ENCODE measurements at regions of chrX and their contacts with region 1.

Region 1: DNA sequence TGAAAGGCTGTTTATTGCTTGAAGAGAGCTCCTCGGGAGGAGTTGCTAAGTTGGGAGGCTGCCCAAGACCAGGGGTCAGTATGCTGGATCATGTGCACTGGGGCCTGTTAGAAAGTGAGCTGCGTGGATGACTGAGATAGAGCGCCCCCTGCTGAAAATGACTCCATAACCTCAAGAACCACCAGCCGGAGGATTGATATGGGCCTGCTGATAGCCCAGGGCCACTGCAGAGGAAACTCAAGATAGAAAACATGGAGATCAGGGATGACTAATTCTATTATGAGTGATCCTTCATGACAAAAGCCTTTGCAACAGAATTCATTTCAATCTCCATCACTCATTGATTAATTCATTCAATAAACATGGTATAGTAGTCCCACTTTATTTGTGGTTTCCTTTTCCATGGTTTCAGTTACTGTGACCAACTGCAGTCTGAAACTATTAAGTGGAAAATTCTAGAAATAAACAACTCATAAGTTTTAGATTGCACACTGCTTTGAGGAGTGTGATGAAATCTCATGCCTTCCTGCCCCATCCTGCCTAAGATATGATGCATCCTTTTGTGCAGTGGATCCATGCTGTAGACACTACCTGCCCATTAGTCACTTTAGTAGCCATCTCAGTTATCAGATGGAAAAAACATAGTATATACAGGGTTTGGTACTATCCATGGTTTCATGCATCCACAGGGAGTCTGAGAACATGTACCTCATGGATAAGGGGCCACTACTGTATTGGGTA is 126.7 kb upstream of the MBNL3 start:
- H3K4me3 Mint-ChIP-seq: no peak overlapping the region
- H3K27ac Mint-ChIP-seq: no peak overlapping the region
- H3K4me1 Mint-ChIP-seq: no peaks in the 10 kb centered on the region
- H3K27me3 Mint-ChIP-seq: no peaks in the 10 kb centered on the region

Region 2: GRCh38 chrX:132092439-132093065 is 523.0 kb before region 1 on chrX:
- intact Hi-C with region 1: loop called (anchors 10 kb)
- H3K4me3 Mint-ChIP-seq: no peak overlapping the region
- H3K27ac Mint-ChIP-seq: no peak overlapping the region
- H3K4me1 Mint-ChIP-seq: peaks cover 11% of the 10 kb centered on the region
- H3K27me3 Mint-ChIP-seq: no peaks in the 10 kb centered on the region

Region 3: DNA sequence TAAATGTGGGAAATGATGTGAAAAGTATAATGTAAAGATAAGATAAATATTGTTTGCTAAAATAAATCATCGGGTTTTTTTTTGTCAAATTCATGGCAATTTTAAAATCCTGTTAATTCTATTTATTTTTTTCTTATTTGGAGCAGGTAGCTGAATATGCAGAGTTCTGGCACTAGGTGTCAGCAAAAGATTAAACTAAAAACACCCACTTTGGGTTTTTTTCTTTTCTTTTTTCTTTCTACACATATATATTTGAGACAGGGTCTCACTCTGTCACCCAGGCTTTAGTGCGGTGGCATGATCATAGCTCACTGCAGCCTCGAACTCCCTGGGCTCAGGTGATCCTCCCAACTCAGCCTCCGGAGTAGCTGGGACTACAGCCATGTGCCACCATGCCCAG is 389.4 kb before region 1 on chrX:
- intact Hi-C with region 1: loop called (anchors 2 kb)
- H3K4me3 Mint-ChIP-seq: no peak overlapping the region
- H3K27ac Mint-ChIP-seq: no peak overlapping the region
- H3K4me1 Mint-ChIP-seq: no peaks in the 10 kb centered on the region
- H3K27me3 Mint-ChIP-seq: no peaks in the 10 kb centered on the region

Region 4: GRCh38 chrX:132292793-132293192 is 322.8 kb before region 1 on chrX:
- intact Hi-C with region 1: loop called (anchors 2 kb)
- H3K4me3 Mint-ChIP-seq: no peak overlapping the region
- H3K27ac Mint-ChIP-seq: no peak overlapping the region
- H3K4me1 Mint-ChIP-seq: no peaks in the 10 kb centered on the region
- H3K27me3 Mint-ChIP-seq: no peaks in the 10 kb centered on the region

Region 5: GRCh38 chrX:132491191-132491590 is 124.4 kb before region 1 on chrX:
- intact Hi-C with region 1: no loop called
- H3K4me3 Mint-ChIP-seq: peak overlapping the region; percentile 40
- H3K27ac Mint-ChIP-seq: peak overlapping the region; percentile 37
- H3K4me1 Mint-ChIP-seq: peaks cover 11% of the 10 kb centered on the region
- H3K27me3 Mint-ChIP-seq: no peaks in the 10 kb centered on the region

Region 6: GRCh38 chrX:132876523-132877338 is 261.2 kb after region 1 on chrX:
- intact Hi-C with region 1: no loop called
- H3K4me3 Mint-ChIP-seq: no peak overlapping the region
- H3K27ac Mint-ChIP-seq: no peak overlapping the region
- H3K4me1 Mint-ChIP-seq: no peaks in the 10 kb centered on the region
- H3K27me3 Mint-ChIP-seq: no peaks in the 10 kb centered on the region

Measured in dendritic cell treated with granulocyte-macrophage colony-stimulating factor and Interleukin-4, amounts not matched to agents 40 ng/mL and 50 ng/mL, for 4 days (primary cell).